ENCODE measurements at regions of chr12 and their contacts with region 1.

Region 1: DNA sequence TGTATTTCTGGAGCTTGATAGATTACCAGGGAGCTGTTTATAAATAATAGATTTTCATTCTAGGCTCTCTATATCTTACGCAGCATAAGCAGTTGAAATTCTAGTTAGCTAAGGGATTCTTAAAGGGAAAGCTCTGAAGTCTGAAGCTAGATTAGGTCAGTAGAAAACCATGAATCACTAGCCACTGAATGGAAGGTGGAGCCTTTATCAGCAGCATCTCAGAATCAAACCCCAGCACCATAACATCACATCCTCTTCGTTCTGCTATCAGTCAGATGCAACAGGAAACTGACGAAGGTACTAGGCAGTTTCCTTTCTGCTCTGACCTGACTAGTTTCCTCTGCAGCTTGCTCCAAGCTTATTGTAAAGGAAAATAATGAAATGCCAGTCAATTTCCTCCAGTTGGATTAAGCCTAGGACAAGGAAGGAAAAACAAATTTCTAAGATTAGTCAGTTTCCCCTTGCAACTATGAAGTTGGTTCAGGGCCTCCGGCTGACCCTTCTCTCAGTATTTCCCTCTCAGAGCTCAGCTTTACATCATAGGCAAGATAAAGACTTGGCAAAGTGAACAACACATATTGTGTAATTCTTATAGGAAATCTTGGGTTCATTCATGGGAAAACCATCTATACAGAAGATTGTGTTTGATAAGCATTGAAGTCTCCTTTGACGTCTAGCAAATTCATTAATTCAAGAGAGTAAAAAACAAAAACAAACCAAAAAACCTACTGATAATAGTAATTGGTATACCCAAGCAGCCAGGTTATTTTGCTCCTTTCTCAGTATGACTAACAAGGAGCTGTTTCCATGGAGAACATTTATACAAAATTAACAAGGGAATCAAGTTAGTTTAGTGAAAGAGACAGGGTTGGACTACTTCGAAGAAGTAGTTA is 43.4 kb upstream of the CFAP54 start:
- DNase-seq: peak; percentile 64
- ATAC-seq: peak; percentile 98
- H3K4me3 Mint-ChIP-seq: peak overlapping the region; percentile 56
- H3K27ac Mint-ChIP-seq: peak overlapping the region; percentile 96
- H3K4me1 Mint-ChIP-seq: peaks cover 45% of the 10 kb centered on the region
- H3K27me3 Mint-ChIP-seq: no peaks in the 10 kb centered on the region

Region 2: DNA sequence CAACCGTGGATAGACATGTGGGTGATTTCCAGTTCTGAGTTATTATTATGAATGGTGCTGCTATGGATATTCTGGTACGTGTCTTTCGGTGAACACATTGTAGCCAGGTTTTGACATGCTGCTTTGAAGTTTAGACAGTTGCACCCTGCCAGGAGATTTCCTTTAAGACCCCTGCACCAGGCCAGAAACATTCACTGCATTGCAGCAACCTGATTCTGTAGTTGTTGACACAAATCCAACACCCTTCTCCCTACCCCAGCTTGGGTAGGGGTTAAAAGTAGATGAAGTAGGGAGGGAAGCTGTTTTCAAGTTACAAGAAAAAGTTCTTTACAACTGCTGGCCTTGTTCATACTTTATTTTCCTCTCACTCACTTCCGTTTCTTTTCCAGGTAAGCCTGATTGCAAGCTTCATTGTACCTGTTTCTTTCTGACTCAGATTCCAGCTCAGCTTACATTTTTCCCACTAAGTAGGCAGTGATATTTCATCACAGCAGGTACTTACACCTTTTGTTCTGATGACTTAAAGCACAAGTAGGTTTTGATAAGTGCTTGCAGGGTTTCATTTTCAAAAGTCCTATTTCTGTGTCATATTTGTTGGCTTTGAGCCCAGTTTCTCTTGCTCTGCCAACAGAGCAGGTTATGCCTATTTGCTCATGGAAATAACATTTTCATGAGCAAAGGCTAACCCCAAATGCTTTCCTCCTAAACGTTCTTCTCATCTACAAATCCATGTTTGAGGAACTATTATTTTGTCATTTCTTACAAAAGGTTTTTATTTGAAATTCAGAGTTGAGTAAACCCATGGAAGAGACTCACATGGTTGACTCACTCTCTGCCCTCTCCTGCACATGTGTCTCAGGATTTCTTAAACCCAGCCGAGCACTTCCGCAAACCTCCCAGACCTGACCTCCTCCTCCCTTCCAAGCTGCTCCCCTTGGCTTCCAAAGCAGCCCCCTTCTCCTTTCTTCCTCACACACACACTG is 398.4 kb before region 1 on chr12:
- CTCF ChIA-PET with region 1: no interaction called
- POLR2A ChIA-PET with region 1: no interaction called
- intact Hi-C with region 1: loop called (anchors 1 to 2 kb)
- DNase-seq: peak; percentile 30
- ATAC-seq: peak; percentile 83
- H3K4me3 Mint-ChIP-seq: peak overlapping the region; percentile 20
- H3K27ac Mint-ChIP-seq: peak overlapping the region; percentile 92
- H3K4me1 Mint-ChIP-seq: peaks cover 58% of the 10 kb centered on the region
- H3K27me3 Mint-ChIP-seq: no peaks in the 10 kb centered on the region

Region 3: DNA sequence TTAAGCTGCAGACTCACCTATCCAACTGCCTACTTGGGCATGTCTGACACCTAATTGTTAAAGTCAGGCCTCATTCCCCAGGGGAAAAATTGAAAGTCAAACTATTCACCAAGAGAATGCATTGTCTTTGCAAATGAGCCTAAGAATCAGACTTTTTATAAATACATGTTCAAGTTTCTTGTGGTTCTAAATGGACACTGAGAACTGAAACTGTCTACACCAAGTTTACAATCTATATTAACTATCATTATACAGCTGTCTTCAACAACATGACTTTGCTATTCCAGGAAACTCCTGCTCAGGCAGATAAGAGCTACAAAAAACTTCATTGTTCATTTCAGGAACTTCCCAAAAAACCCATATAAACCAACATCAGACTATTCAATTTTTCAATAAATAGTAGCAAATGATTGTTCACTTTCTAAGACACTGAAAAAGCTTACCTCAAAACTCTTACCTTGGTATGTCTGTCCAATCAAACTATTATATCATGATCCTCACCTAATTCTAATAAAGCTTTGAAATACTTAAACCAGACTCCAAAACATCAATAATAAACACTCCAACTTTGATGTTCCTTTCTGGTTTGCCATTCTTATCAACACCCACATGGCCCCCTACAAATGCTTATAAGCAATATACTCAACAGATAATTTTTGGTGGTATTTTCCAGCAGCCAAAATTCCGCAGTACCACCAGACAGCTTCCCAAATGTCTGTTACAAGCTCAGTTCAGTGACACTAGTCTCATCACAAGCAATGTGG is 69.9 kb before region 1 on chr12:
- CTCF ChIA-PET with region 1: no interaction called
- POLR2A ChIA-PET with region 1: no interaction called
- intact Hi-C with region 1: loop called in 1 of 2 experiments (anchors 1 kb)
- DNase-seq: no peak
- ATAC-seq: no peak
- H3K4me3 Mint-ChIP-seq: no peak overlapping the region
- H3K27ac Mint-ChIP-seq: peak overlapping the region; percentile 79
- H3K4me1 Mint-ChIP-seq: peaks cover 82% of the 10 kb centered on the region
- H3K27me3 Mint-ChIP-seq: no peaks in the 10 kb centered on the region

Region 4: GRCh38 chr12:96425321-96425720 is 20.6 kb before region 1 on chr12:
- CTCF ChIA-PET with region 1: interaction called, 4 read pairs
- POLR2A ChIA-PET with region 1: interaction called, 9 read pairs
- intact Hi-C with region 1: loop called (anchors 1 to 2 kb)
- DNase-seq: peak; percentile 65
- ATAC-seq: peak; percentile 80
- H3K4me3 Mint-ChIP-seq: no peak overlapping the region
- H3K27ac Mint-ChIP-seq: peak overlapping the region; percentile 63
- H3K4me1 Mint-ChIP-seq: peaks cover 47% of the 10 kb centered on the region
- H3K27me3 Mint-ChIP-seq: peaks cover 2% of the 10 kb centered on the region

Region 5: GRCh38 chr12:96434107-96434506 is 11.8 kb before region 1 on chr12:
- CTCF ChIA-PET with region 1: interaction called, 10 read pairs
- POLR2A ChIA-PET with region 1: interaction called, 3 read pairs
- intact Hi-C with region 1: loop called (anchors 1 kb)
- DNase-seq: peak; percentile 85
- ATAC-seq: peak; percentile 99
- H3K4me3 Mint-ChIP-seq: peak overlapping the region; percentile 17
- H3K27ac Mint-ChIP-seq: peak overlapping the region; percentile 83
- H3K4me1 Mint-ChIP-seq: peaks cover 26% of the 10 kb centered on the region
- H3K27me3 Mint-ChIP-seq: no peaks in the 10 kb centered on the region

Region 6: GRCh38 chr12:96571101-96571862 is 125.3 kb after region 1 on chr12:
- CTCF ChIA-PET with region 1: no interaction called
- POLR2A ChIA-PET with region 1: no interaction called
- intact Hi-C with region 1: loop called in 1 of 2 experiments (anchors 2 kb)
- DNase-seq: peak; percentile 17
- ATAC-seq: peak; percentile 88
- H3K4me3 Mint-ChIP-seq: no peak overlapping the region
- H3K27ac Mint-ChIP-seq: no peak overlapping the region
- H3K4me1 Mint-ChIP-seq: peaks cover 18% of the 10 kb centered on the region
- H3K27me3 Mint-ChIP-seq: peaks cover 17% of the 10 kb centered on the region

Measured in activated CD4-positive, alpha-beta T cell treated with anti-CD3 and anti-CD28 coated beads for 36 hours (primary cell).